ENCODE measurements at regions of chr19 and their contacts with region 1.

Region 1: GRCh38 chr19:11814029-11814699 is at the start of gene ZNF440:
- DNase-seq: peak; percentile 94
- H3K4me3 Mint-ChIP-seq: peak within 1 kb of the TSS; percentile 85
- H3K27ac Mint-ChIP-seq: peak within 1 kb of the TSS; percentile 45
- H3K4me1 Mint-ChIP-seq: peaks cover 15% of the 10 kb centered on the region
- H3K27me3 Mint-ChIP-seq: no peaks in the 10 kb centered on the region
- total RNA-seq, gene ZNF440: 5.7 to 6.4 TPM

Region 2: GRCh38 chr19:11848594-11849469 is 34.7 kb after region 1 on chr19 and contains the start of gene ZNF439:
- CTCF ChIA-PET with region 1: interaction called, 3 read pairs
- POLR2A ChIA-PET with region 1: no interaction called
- intact Hi-C with region 1: loop called (anchors 2 kb)
- DNase-seq: peak; percentile 94
- H3K4me3 Mint-ChIP-seq: peak within 1 kb of the TSS; percentile 83
- H3K27ac Mint-ChIP-seq: peak within 1 kb of the TSS; percentile 66
- H3K4me1 Mint-ChIP-seq: peaks cover 17% of the 10 kb centered on the region
- H3K27me3 Mint-ChIP-seq: no peaks in the 10 kb centered on the region
- total RNA-seq, gene ZNF439: 4.8 to 5.6 TPM

Region 3: DNA sequence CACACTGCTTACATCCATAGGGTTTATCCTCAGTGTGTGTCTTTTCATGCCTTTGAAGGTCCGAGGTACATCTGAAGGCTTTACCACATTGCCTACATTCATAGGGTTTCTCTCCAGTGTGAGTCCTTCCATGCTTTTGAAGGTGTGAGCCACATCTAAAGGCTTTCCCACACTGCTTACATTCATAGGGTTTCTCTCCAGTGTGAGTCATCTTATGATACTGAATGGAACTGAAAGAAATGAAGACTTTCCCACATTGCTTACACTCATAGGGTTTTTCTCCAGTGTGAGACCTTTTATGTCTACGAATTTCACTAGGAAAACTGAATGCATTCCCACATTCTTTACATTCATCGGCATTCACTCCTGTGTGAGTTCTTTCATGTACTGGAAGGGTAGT is 318.9 kb after region 1 on chr19:
- CTCF ChIA-PET with region 1: no interaction called
- POLR2A ChIA-PET with region 1: no interaction called
- intact Hi-C with region 1: no loop called
- DNase-seq: no peak
- H3K4me3 Mint-ChIP-seq: no peak overlapping the region
- H3K27ac Mint-ChIP-seq: no peak overlapping the region
- H3K4me1 Mint-ChIP-seq: peaks cover 13% of the 10 kb centered on the region
- H3K27me3 Mint-ChIP-seq: no peaks in the 10 kb centered on the region